Activated B cell treated with CpG ODN at 0.5 μM for 24 hours (primary cell): ENCODE measurements at regions of chr17 and their contacts with region 1.

Region 1: GRCh38 chr17:16537130-16537458 is 31.9 kb downstream of the ZNF287 start:
- DNase-seq: no peak
- ATAC-seq: no peak
- H3K4me3 Mint-ChIP-seq: peak overlapping the region; percentile 98
- H3K27ac Mint-ChIP-seq: peak overlapping the region; percentile 99
- H3K4me1 Mint-ChIP-seq: peaks cover 21% of the 10 kb centered on the region
- H3K27me3 Mint-ChIP-seq: no peaks in the 10 kb centered on the region
- CTCF ChIP-seq: no peak

Region 2: DNA sequence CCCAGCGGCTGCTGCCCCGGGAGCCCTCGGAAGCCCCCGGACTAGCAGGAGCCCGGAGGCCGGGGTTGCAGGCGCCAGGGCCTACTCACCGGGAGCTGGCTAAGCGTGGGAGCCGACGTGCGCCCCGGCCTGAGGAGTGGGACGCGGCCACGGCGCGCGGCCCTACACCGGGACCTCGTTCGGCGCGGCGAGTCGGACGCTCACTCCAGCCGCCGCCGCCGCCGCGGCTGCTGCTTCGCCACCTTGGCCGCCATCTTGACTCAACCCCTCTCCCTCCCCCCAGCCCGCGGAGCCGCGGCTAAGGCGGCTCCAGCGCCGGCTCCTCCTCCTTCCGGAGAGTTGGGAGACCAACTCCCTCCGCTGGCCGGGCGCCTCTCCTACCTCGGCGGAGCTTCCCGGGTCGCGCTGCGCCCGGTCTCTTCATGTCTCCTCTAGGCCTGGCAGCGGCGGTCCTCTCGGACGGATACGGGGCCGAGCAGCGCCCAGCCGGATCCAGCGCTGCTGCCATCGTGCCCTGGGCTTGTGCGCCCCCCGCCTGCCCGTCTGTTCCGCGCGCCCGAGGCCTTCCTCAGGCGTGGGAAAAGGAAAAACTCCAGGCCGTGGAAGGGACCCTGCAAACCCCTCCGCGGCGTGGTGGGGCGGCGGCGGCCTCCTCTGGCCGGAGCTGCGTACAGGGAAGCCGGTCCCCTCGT is 321.7 kb before region 1 on chr17 and contains the start of gene NCOR1:
- CTCF ChIA-PET with region 1: no interaction called
- POLR2A ChIA-PET with region 1: interaction called, 8 read pairs
- intact Hi-C with region 1: loop called (anchors 1 kb)
- DNase-seq: peak; percentile 83
- ATAC-seq: peak; percentile 86
- H3K4me3 Mint-ChIP-seq: peak within 1 kb of the TSS; percentile 98
- H3K27ac Mint-ChIP-seq: peak within 1 kb of the TSS; percentile 86
- H3K4me1 Mint-ChIP-seq: peaks cover 50% of the 10 kb centered on the region
- H3K27me3 Mint-ChIP-seq: no peaks in the 10 kb centered on the region
- CTCF ChIP-seq: no peak
- total RNA-seq, gene NCOR1: 163 and 188 TPM in 2 replicates

Region 3: GRCh38 chr17:16353317-16354174 is 183.5 kb before region 1 on chr17 and contains the start of gene CENPV:
- CTCF ChIA-PET with region 1: no interaction called
- POLR2A ChIA-PET with region 1: interaction called, 11 read pairs
- intact Hi-C with region 1: no loop called
- DNase-seq: peak; percentile 73
- ATAC-seq: peak; percentile 82
- H3K4me3 Mint-ChIP-seq: peak within 1 kb of the TSS; percentile 90
- H3K27ac Mint-ChIP-seq: peak within 1 kb of the TSS; percentile 71
- H3K4me1 Mint-ChIP-seq: peaks cover 18% of the 10 kb centered on the region
- H3K27me3 Mint-ChIP-seq: no peaks in the 10 kb centered on the region
- CTCF ChIP-seq: no peak
- total RNA-seq, gene CENPV: 24.0 and 25.7 TPM in 2 replicates

Region 4: GRCh38 chr17:16478649-16479048 is 58.4 kb before region 1 on chr17:
- CTCF ChIA-PET with region 1: no interaction called
- POLR2A ChIA-PET with region 1: no interaction called
- intact Hi-C with region 1: no loop called
- DNase-seq: no peak
- ATAC-seq: no peak
- H3K4me3 Mint-ChIP-seq: no peak overlapping the region
- H3K27ac Mint-ChIP-seq: no peak overlapping the region
- H3K4me1 Mint-ChIP-seq: no peaks in the 10 kb centered on the region
- H3K27me3 Mint-ChIP-seq: no peaks in the 10 kb centered on the region
- CTCF ChIP-seq: no peak

Region 5: DNA sequence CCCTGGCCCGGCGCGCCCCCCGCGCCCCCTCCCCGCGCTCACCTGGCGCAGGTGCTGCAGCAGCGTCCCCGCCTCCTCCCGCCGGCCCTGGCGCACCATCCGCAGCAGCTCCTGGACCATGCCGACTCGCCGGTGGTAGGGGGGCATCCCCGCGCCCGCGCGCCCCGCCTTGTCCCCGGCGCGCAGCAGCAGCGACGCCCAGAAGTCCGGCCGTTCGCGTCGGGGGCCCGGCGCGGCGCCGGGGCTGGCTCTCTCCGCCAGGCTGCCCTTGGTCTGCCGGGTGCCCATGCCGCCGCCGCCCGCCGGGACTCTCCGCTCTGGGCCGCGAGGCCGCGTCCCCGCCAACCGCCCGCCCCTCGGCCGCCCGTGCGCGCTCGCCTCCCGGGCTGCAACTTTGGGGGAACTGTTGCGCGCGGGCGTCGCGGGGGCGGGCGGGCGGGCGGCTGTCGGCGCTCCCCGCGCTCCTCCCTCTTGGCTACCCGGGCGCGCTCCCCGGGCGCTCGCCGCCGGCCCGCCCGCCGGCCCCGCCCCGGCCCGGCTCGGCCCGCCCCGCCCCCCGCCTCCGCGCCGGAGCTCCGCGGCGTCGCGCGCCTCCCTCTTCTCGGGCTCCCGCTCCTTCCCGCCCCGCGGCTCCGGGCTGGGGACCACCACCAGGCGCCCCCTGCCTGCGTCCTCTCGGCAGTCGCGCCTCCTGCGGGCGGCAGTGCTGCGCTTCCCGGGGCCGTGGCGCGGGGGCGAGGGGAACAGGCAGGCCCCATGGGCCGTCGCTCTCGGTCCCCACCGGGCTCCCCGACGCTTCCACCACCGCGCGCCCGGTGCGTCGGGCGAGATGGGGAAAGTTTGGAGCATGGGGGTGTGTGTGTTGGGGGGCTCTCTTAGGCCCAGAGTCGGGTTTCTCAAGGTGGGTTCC is 45.1 kb before region 1 on chr17 and contains the start of gene LRRC75A:
- CTCF ChIA-PET with region 1: no interaction called
- POLR2A ChIA-PET with region 1: interaction called, 5 read pairs
- intact Hi-C with region 1: loop called (anchors 1 kb)
- DNase-seq: peak; percentile 57
- ATAC-seq: peak; percentile 91
- H3K4me3 Mint-ChIP-seq: peak within 1 kb of the TSS; percentile 74
- H3K27ac Mint-ChIP-seq: no peak within 1 kb of the TSS
- H3K4me1 Mint-ChIP-seq: peaks cover 8% of the 10 kb centered on the region
- H3K27me3 Mint-ChIP-seq: peaks cover 5% of the 10 kb centered on the region
- CTCF ChIP-seq: no peak
- total RNA-seq, gene LRRC75A: 0.54 and 0.98 TPM in 2 replicates

Region 6: GRCh38 chr17:16589097-16589969 is 52.2 kb after region 1 on chr17:
- CTCF ChIA-PET with region 1: interaction called, 28 read pairs
- POLR2A ChIA-PET with region 1: interaction called, 18 read pairs
- intact Hi-C with region 1: loop called (anchors 1 kb)
- DNase-seq: peak; percentile 89
- ATAC-seq: peak; percentile 97
- H3K4me3 Mint-ChIP-seq: peak overlapping the region; percentile 74
- H3K27ac Mint-ChIP-seq: no peak overlapping the region
- H3K4me1 Mint-ChIP-seq: peaks cover 5% of the 10 kb centered on the region
- H3K27me3 Mint-ChIP-seq: peaks cover 40% of the 10 kb centered on the region
- CTCF ChIP-seq: peak; percentile 75

Region 7: DNA sequence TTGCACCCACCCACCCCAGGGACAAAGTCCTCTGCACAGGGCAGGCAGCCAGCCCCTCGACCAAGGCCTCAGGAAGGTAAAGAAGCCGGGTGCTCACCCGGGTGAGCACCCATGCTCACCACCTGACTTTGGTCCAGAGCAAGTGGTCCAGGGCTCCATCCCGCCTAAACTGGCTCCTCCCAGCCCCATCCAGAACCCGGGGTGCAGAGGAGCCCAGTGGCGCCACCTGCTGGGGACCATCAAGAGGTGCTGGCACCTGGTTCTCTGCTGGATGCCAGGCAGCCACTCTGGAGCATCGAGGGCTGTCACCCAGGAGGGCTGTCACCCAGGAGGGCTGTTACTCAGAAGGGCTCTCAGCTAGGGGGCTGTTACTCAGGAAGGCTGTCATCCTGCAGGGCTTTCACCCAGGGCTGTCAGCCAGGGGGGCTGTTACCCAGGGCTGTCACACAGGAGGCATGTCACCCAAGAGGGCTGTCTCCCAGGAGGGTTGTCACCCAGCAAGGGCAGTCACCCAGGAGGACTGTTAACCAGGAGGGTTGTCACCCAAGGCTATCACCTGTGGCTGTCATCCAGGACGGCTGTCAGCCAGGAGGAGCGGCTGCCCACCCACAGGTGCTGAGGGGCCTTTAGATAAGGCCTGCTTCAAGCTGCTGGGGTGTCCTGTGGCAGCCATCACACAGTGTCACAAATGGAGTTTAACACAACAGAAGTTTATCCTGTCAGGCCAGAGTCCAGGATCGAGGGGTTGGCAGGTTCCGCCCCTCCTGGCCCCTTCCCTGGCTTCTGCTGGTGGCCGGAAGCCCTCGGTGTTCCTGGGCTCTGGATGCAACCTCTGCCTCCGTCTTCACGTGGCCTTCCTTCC is 336.3 kb after region 1 on chr17:
- CTCF ChIA-PET with region 1: no interaction called
- POLR2A ChIA-PET with region 1: no interaction called
- intact Hi-C with region 1: loop called (anchors 10 kb)
- DNase-seq: peak; percentile 24
- ATAC-seq: peak; percentile 34
- H3K4me3 Mint-ChIP-seq: no peak overlapping the region
- H3K27ac Mint-ChIP-seq: no peak overlapping the region
- H3K4me1 Mint-ChIP-seq: no peaks in the 10 kb centered on the region
- H3K27me3 Mint-ChIP-seq: peaks cover 2% of the 10 kb centered on the region
- CTCF ChIP-seq: no peak